ENCODE measurements at regions of chr4 and their contacts with region 1.

Region 1: GRCh38 chr4:6250235-6250983 is 19.2 kb upstream of the WFS1 start:
- DNase-seq: no peak
- ATAC-seq: peak; percentile 63
- H3K4me3 Mint-ChIP-seq: no peak overlapping the region
- H3K27ac Mint-ChIP-seq: no peak overlapping the region
- H3K4me1 Mint-ChIP-seq: peaks cover 5% of the 10 kb centered on the region
- H3K27me3 Mint-ChIP-seq: peaks cover 54% of the 10 kb centered on the region

Region 2: GRCh38 chr4:6134612-6135220 is 115.7 kb before region 1 on chr4:
- CTCF ChIA-PET with region 1: interaction called, 39 read pairs
- DNase-seq: peak; percentile 87
- ATAC-seq: peak; percentile 100
- H3K4me3 Mint-ChIP-seq: no peak overlapping the region
- H3K27ac Mint-ChIP-seq: peak overlapping the region; percentile 74
- H3K4me1 Mint-ChIP-seq: peaks cover 36% of the 10 kb centered on the region
- H3K27me3 Mint-ChIP-seq: no peaks in the 10 kb centered on the region

Region 3: DNA sequence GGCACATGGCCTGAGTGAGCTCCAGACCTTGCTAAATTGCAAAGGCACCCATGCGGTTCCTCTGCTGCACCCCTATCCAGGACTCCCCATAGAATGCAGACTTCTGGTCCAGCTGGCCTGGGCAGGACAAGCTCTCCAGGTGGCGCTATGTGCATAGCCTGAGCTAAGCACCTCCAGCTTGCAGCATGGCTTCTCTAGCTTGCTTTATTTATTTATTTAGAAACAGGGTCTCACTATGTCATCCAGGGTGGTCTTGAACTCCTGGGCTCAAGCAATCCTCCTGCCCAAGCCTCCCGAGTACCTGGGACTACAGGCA is 13.8 kb after region 1 on chr4:
- CTCF ChIA-PET with region 1: interaction called, 71 read pairs
- DNase-seq: peak; percentile 72
- ATAC-seq: no peak
- H3K4me3 Mint-ChIP-seq: no peak overlapping the region
- H3K27ac Mint-ChIP-seq: no peak overlapping the region
- H3K4me1 Mint-ChIP-seq: peaks cover 24% of the 10 kb centered on the region
- H3K27me3 Mint-ChIP-seq: peaks cover 53% of the 10 kb centered on the region

Region 4: DNA sequence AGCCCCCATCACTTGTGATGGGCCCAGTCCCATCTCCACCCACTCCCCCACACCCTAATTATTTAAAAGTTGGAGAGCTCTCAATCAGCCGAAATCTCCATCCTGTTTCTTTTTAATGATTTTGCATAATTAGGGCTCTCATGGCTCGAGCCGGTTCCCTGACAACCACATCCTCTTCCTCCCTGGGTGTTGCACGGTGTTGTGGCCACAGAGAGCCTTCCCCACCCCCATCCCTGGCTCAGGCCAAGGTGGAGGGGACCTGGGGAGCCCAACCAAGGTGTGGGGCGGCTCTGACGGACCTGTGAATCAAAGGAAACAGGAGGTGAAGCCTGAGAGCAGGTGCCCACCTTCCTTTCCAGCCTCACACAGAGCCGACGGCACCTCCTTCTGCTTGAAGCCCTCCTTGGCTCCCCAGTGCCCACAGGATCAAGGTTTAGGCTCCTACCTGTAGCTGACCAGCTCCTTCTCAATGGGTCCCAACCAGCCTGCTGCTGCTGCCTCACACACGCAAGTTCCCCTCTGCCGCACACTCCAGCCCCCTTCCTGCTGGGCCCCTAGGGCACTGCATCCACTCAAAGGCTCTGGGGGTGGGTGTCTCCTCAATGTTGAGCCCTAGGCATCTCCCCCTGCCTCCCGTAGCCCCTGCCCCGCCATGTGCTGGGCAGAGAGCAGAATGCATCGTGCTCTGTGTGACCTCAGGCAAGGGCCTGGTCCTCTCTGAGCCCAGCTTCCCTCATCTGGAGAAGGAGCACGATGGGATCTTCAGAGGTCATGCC is 88.0 kb after region 1 on chr4:
- CTCF ChIA-PET with region 1: interaction called, 685 read pairs
- DNase-seq: peak; percentile 81
- ATAC-seq: peak; percentile 84
- H3K4me3 Mint-ChIP-seq: peak overlapping the region; percentile 51
- H3K27ac Mint-ChIP-seq: peak overlapping the region; percentile 54
- H3K4me1 Mint-ChIP-seq: peaks cover 22% of the 10 kb centered on the region
- H3K27me3 Mint-ChIP-seq: peaks cover 44% of the 10 kb centered on the region